ENCODE measurements at regions of chr7 and their contacts with region 1.

Region 1: DNA sequence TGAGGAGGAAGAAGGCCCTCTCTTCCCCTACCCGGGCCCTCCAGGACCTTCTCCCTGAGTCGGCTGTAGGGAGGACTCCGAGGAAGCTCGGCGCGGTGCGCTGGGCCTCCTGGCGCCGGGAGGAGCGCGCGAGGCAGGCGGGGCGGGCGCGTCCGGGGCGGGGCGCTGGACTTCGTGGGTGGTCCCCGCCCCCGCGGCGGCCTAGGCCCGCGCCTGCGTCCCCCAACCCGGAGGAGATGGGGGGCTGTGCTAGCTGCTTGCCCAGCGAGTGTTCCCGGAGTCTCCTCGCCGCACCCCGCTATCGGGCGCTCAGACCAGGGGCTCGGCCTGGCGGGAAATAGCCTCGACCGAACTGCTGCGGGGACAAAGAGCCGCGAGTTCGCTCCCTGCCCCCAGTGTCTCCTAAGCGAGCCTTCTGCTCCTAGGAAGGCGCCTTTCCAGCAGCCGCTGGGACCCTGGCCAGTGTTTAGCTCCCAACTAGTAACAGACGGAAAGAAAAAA is 19.2 kb upstream of the SMO start:
- DNase-seq: no peak
- H3K4me3 ChIP-seq: no peak overlapping the region
- H3K27ac ChIP-seq: no peak overlapping the region
- H3K4me1 ChIP-seq: peaks cover 23% of the 10 kb centered on the region
- CTCF ChIP-seq: no peak

Region 2: GRCh38 chr7:129144095-129144833 is 25.0 kb before region 1 on chr7 and contains the start of gene TSPAN33:
- CTCF ChIA-PET with region 1: interaction called, 3 read pairs
- POLR2A ChIA-PET with region 1: interaction called, 4 read pairs
- intact Hi-C with region 1: loop called (anchors 2 kb)
- DNase-seq: peak; percentile 78
- H3K4me3 ChIP-seq: peak within 1 kb of the TSS; percentile 76
- H3K27ac ChIP-seq: peak within 1 kb of the TSS; percentile 60
- H3K4me1 ChIP-seq: peaks cover 38% of the 10 kb centered on the region
- CTCF ChIP-seq: no peak
- total RNA-seq, gene TSPAN33: 11.5 and 14.6 TPM in 2 replicates

Measured in OCI-LY7 (cell line).